ENCODE measurements at regions of chrX and their contacts with region 1.

Region 1: DNA sequence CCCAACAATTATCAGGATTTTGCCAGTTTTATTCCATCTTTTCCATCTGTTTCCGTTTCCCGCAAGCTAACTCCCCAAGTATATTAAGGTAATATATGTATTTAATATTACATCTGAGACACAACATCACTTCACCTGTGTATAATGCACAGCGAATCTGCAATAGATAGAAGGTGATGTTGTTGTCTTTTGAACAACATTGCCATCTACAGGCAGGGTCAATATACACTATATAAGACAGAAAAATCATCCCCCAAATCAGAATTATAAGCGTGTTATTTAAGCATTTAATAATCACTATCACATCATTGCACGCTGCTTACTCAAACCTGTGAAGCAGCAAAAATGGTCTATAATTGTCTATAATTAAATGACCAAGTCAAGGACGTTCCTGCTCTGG is 1115.5 kb downstream of the NLGN4X start:
- DNase-seq: no peak
- H3K4me3 ChIP-seq: no peak overlapping the region
- H3K27ac ChIP-seq: no peak overlapping the region
- H3K4me1 ChIP-seq: no peaks in the 10 kb centered on the region
- H3K27me3 ChIP-seq: no peaks in the 10 kb centered on the region
- CTCF ChIP-seq: peak in 3 of 6 experiments; percentile 19 to 31 (median 31)
- POLR2A ChIP-seq: no peak

Region 2: GRCh38 chrX:4547213-4547836 is 565.8 kb before region 1 on chrX:
- intact Hi-C with region 1: loop called (anchors 10 kb)
- DNase-seq: no peak
- H3K4me3 ChIP-seq: no peak overlapping the region
- H3K27ac ChIP-seq: no peak overlapping the region
- H3K4me1 ChIP-seq: no peaks in the 10 kb centered on the region
- H3K27me3 ChIP-seq: no peaks in the 10 kb centered on the region
- CTCF ChIP-seq: peak; percentile 64 to 97 (median 78)
- POLR2A ChIP-seq: no peak

Region 3: GRCh38 chrX:4909348-4909747 is 203.8 kb before region 1 on chrX:
- intact Hi-C with region 1: no loop called
- DNase-seq: no peak
- H3K4me3 ChIP-seq: no peak overlapping the region
- H3K27ac ChIP-seq: no peak overlapping the region
- H3K4me1 ChIP-seq: no peaks in the 10 kb centered on the region
- H3K27me3 ChIP-seq: no peaks in the 10 kb centered on the region
- CTCF ChIP-seq: no peak
- POLR2A ChIP-seq: no peak